PC-3 (cell line): ENCODE measurements at regions of chr11 and their contacts with region 1.

Region 1: DNA sequence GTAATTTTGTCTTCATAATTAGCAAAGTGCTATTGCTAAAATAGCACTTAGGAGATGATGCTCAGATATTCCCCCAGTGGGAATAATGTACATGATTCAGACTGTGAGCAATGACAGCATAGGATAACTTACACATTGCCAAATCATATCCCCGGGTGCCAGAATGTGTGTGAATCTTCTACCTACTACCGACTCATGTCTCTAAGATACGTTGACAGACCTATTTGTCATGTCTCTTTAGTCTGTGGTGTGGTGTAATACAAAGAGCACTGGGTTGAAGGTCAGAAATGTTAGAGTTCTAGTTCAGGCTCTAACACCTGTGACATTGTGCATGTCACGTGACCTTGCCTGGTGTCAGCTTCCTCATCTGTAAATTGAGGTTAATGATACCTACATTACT is 31.0 kb upstream of the PICALM start:
- DNase-seq: peak; percentile 82
- ATAC-seq: peak; percentile 29
- H3K4me3 ChIP-seq: no peak overlapping the region
- H3K27ac ChIP-seq: 0 out of 2 replicates have a peak overlapping the region, but pooled peaks have one; percentile 4
- H3K4me1 ChIP-seq: peaks cover 32% of the 10 kb centered on the region
- H3K27me3 ChIP-seq: no peaks in the 10 kb centered on the region
- CTCF ChIP-seq: no peak

Region 2: DNA sequence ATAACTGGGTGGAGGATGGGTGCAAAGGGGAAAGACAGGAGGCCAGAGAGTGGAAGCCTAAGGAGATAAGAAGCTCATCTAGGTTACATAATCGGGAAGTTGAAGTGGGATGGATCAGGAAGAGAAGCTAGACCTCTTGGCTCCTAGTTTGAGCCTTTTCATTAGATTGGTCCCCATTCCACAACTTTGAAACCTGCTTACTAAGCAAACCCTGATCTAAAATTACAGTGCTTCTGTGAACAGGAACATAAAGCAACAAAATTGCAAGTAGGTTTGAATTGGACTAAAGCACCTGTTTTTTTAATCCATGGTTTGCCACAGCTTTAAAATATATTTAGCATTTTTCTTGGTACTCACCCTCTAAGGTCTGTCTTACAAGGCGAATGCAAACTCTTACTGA is 64.2 kb after region 1 on chr11:
- CTCF ChIA-PET with region 1: no interaction called
- POLR2A ChIA-PET with region 1: no interaction called
- intact Hi-C with region 1: loop called (anchors 2 kb)
- DNase-seq: no peak
- ATAC-seq: no peak
- H3K4me3 ChIP-seq: no peak overlapping the region
- H3K27ac ChIP-seq: no peak overlapping the region
- H3K4me1 ChIP-seq: peaks cover 17% of the 10 kb centered on the region
- H3K27me3 ChIP-seq: no peaks in the 10 kb centered on the region
- CTCF ChIP-seq: no peak